PC-3 (cell line): ENCODE measurements at regions of chr5 and their contacts with region 1.

Region 1: GRCh38 chr5:31551878-31552277 is 19.8 kb downstream of the C5orf22 start:
- DNase-seq: peak; percentile 24
- ATAC-seq: peak; percentile 45; the same call in 1 of the 2 replicates
- H3K4me3 ChIP-seq: no peak overlapping the region
- H3K27ac ChIP-seq: no peak overlapping the region
- H3K4me1 ChIP-seq: peaks cover 16% of the 10 kb centered on the region
- H3K27me3 ChIP-seq: no peaks in the 10 kb centered on the region
- CTCF ChIP-seq: no peak; the same call in 1 of the 2 replicates

Region 2: GRCh38 chr5:31523041-31523440 is 28.8 kb before region 1 on chr5:
- CTCF ChIA-PET with region 1: no interaction called
- POLR2A ChIA-PET with region 1: interaction called, 16 read pairs
- intact Hi-C with region 1: no loop called
- DNase-seq: no peak
- ATAC-seq: no peak
- H3K4me3 ChIP-seq: no peak overlapping the region
- H3K27ac ChIP-seq: no peak overlapping the region
- H3K4me1 ChIP-seq: no peaks in the 10 kb centered on the region
- H3K27me3 ChIP-seq: no peaks in the 10 kb centered on the region
- CTCF ChIP-seq: no peak

Region 3: DNA sequence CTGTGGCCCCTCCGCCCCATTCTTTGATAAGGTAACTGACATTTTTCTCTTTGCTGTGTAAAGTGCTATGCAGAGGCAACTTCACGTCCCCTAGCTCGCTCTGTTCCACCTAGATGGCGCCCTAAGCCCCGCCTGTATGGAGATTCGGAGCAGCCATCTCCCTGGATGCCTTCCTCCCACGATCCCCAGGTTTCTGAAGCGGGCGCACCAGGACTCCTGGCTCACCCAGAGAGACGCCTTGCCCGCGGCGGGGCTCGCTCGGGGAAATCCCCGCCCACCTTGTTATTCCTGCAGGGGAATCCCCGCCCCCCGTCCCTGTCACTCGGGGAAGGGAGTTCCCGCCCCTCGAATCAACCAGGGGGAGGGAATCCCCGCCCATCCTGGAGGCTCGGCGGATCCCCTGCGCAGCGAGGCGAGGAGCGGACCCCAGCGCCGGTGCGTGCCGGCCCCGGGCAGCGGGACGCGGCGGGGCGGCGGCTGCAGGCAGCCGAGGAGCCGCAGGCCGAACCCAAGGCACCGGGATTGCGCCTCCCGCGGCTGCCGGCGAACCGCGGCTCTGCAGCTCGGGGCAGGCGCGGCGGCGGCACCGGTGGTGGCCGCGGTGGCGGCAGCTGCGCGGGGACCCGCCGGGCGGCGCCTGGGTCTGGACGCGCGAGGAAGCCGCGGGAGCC is 87.0 kb after region 1 on chr5 and contains the start of gene PDZD2:
- CTCF ChIA-PET with region 1: no interaction called
- POLR2A ChIA-PET with region 1: no interaction called
- intact Hi-C with region 1: no loop called
- DNase-seq: peak; percentile 68
- ATAC-seq: peak; percentile 87
- H3K4me3 ChIP-seq: peak within 1 kb of the TSS; percentile 72
- H3K27ac ChIP-seq: no peak within 1 kb of the TSS
- H3K4me1 ChIP-seq: peaks cover 5% of the 10 kb centered on the region; the same call in 1 of the 2 replicates
- H3K27me3 ChIP-seq: peaks cover 36% of the 10 kb centered on the region
- CTCF ChIP-seq: peak; percentile 71
- total RNA-seq, gene PDZD2: 2.0 and 2.9 TPM in 2 replicates